ENCODE measurements at regions of chr20 and their contacts with region 1.

Region 1: DNA sequence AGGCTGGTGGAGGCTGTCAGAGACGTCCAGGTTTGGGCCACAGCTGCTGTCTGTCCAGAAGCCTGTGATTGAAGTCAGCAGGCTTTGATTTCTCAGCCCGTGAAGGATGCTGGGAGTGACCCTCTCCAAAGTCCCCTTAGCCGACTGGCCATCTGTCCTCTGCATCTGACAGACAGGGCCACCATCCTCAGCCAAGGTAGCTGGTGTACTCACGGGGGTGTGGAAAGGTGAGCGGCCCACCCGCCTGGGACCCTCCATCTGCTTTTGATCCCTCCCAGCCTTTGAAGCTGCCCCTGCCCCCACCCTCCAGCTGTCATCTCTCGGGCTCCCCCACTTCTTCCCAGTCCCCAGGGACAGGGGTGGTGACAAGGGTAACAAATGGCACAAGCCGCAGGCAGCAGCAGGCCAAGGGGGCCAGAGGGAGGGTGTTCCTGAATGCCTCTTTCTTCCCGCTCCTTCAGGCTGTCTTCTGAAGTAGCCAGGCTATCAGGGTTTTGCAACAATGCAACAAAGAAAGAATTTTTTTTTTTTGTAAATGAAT is 84.4 kb downstream of the EYA2 start:
- DNase-seq: no peak
- H3K4me3 Mint-ChIP-seq: peak overlapping the region; percentile 9
- H3K27ac Mint-ChIP-seq: no peak overlapping the region
- H3K4me1 Mint-ChIP-seq: peaks cover 47% of the 10 kb centered on the region
- H3K27me3 Mint-ChIP-seq: peaks cover 68% of the 10 kb centered on the region

Region 2: GRCh38 chr20:46994341-46994740 is 15.3 kb after region 1 on chr20:
- CTCF ChIA-PET with region 1: interaction called, 8 read pairs
- POLR2A ChIA-PET with region 1: interaction called, 24 read pairs
- DNase-seq: peak; percentile 86
- H3K4me3 Mint-ChIP-seq: peak overlapping the region; percentile 76
- H3K27ac Mint-ChIP-seq: peak overlapping the region; percentile 95
- H3K4me1 Mint-ChIP-seq: peaks cover 81% of the 10 kb centered on the region
- H3K27me3 Mint-ChIP-seq: peaks cover 11% of the 10 kb centered on the region